Activated CD4-positive, alpha-beta T cell treated with anti-CD3 and anti-CD28 coated beads for 36 hours (primary cell): ENCODE measurements at regions of chr5 and their contacts with region 1.

Region 1: GRCh38 chr5:170225326-170226128 is 7.3 kb upstream of the C5orf58 start:
- DNase-seq: peak; percentile 87
- ATAC-seq: peak; percentile 64
- H3K4me3 Mint-ChIP-seq: no peak overlapping the region
- H3K27ac Mint-ChIP-seq: no peak overlapping the region
- H3K4me1 Mint-ChIP-seq: peaks cover 3% of the 10 kb centered on the region
- H3K27me3 Mint-ChIP-seq: no peaks in the 10 kb centered on the region

Region 2: DNA sequence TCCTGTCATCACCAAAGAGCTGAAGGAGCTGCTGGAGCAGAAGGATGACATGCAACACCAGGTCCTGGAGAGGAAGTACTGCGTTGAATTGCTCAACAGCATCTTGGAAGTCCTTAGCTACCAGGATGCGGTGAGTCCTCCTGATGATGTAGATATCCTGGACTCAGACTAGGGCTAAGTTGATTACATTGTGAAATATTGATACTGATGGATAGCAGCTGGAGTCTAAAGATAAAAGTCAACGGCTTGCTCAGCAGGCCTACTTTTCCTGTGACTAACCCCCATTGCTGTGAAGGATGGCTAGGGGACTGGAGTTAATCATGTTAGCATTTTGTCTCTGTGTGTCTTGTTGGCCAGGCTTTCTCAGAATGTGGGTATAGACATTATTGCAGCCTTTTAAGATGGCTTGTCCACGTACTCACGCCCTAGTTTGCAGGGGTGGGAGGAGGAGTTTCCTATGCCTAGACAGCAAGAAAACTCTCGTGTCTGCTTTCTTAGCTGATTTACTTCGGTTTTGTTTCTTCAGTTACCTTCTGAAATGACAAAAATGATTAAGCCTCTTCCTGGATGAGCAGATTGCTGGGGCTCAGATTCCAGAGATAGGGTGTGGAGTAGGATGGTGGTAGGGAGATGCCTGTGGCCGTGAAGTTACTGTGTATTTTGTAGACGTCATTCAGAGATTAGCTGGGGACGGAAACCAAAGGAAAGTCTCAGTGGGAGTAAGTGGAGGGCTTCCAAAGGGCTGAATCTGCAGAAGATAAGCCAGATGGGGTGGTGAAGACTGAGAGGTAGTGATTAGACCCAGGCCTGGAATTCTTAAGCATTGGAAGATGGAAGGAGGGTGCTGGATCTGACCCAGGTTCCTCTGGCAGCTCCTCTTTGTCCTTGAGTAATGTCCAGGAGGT is 422.2 kb before region 1 on chr5:
- CTCF ChIA-PET with region 1: no interaction called
- POLR2A ChIA-PET with region 1: no interaction called
- intact Hi-C with region 1: no loop called
- DNase-seq: no peak
- ATAC-seq: no peak
- H3K4me3 Mint-ChIP-seq: no peak overlapping the region
- H3K27ac Mint-ChIP-seq: no peak overlapping the region
- H3K4me1 Mint-ChIP-seq: peaks cover 54% of the 10 kb centered on the region
- H3K27me3 Mint-ChIP-seq: no peaks in the 10 kb centered on the region

Region 3: DNA sequence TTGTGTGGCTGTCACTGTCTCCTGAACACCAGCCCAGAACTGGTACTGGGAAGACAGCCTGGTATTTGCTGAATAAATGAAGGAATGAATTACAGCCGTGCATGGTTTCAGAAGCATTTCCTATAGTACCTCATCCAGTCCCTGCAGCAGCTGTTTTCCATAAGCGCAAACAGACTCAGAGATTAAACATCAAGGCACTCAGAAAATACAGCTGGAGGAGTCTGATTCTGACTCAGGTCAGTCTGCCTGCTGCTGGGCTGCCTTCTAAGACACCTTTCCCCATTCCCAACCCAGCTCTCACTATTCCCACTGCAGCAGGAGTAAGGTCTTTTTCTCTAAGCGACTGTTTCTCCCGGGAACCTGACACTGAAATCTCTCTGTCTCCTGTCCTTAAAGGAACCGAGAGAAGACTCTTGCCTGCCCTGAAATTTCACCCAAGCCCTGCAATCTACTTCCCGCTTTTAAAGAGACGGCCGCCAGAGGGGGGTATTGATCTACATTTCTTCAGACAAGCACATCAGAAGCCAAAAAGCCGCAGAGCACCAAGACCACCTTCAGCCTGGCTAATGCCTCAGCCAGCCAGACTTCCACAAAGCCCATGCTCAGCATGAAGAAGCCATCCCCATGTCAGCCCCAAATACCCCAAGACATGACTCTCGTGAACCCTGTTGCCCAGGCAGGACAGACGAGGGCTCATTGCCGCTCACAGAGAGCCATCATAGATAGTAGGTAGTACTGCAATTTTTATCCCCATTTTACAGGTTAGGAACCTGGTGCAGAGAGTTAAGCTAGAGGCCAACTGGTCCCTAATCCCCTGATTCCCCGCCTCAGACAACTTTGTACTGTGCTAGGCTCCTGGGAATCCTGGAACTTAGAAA is 125.2 kb before region 1 on chr5:
- CTCF ChIA-PET with region 1: no interaction called
- POLR2A ChIA-PET with region 1: no interaction called
- intact Hi-C with region 1: loop called in 1 of 2 experiments (anchors 2 kb)
- DNase-seq: peak; percentile 85
- ATAC-seq: peak; percentile 61
- H3K4me3 Mint-ChIP-seq: no peak overlapping the region
- H3K27ac Mint-ChIP-seq: no peak overlapping the region
- H3K4me1 Mint-ChIP-seq: no peaks in the 10 kb centered on the region
- H3K27me3 Mint-ChIP-seq: peaks cover 2% of the 10 kb centered on the region

Region 4: GRCh38 chr5:170235876-170236864 is 10.6 kb after region 1 on chr5:
- CTCF ChIA-PET with region 1: interaction called, 18 read pairs
- POLR2A ChIA-PET with region 1: no interaction called
- intact Hi-C with region 1: no loop called
- DNase-seq: no peak
- ATAC-seq: no peak
- H3K4me3 Mint-ChIP-seq: no peak overlapping the region
- H3K27ac Mint-ChIP-seq: no peak overlapping the region
- H3K4me1 Mint-ChIP-seq: peaks cover 14% of the 10 kb centered on the region
- H3K27me3 Mint-ChIP-seq: no peaks in the 10 kb centered on the region

Region 5: DNA sequence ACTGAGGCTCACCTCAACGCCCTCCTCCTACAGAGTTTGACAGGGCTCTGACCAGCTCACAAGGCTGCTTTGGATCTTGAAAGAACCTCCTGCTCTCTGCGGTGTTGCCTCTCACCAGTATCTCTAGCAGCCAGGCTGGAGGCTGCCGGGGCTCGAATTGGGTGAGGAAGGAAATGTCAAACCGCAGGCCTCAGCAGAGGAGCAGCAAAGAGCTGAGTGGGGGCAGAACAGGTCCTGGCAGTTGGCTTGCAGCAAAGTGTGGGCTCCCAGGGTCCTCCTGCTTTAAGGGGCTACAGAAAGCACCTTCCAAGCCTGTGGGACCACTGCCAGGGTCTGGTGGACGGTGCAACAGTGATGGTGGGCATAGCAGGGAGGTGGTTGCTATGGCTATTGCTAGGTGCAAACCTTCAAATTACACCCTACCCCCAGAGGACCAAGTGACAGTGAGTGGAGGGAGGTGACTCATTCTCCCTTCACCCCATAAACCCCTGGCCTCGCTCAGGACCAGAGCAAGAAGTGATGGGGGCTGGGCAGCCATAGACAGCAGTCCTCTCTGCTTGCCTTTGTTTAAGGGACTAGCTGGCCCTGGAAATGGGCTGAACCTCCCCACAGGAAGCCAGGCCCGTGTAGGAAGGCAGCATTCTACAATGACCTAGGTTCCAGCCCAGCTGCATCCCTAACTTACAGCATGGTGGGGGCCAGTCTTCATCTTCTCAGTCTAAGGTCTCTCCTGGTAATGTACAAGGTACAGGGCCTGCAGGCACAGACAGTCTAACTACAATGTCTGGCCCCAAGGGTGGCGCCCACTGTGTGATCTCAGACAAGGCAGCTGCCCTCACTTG is 53.3 kb after region 1 on chr5:
- CTCF ChIA-PET with region 1: interaction called, 11 read pairs
- POLR2A ChIA-PET with region 1: interaction called, 3 read pairs
- intact Hi-C with region 1: loop called in 1 of 2 experiments (anchors 10 kb)
- DNase-seq: peak; percentile 93
- ATAC-seq: peak; percentile 73
- H3K4me3 Mint-ChIP-seq: peak overlapping the region; percentile 48
- H3K27ac Mint-ChIP-seq: peak overlapping the region; percentile 90
- H3K4me1 Mint-ChIP-seq: peaks cover 97% of the 10 kb centered on the region
- H3K27me3 Mint-ChIP-seq: no peaks in the 10 kb centered on the region

Region 6: GRCh38 chr5:170420780-170421412 is 195.4 kb after region 1 on chr5:
- CTCF ChIA-PET with region 1: interaction called, 99 read pairs
- POLR2A ChIA-PET with region 1: no interaction called
- intact Hi-C with region 1: loop called (anchors 1 kb)
- DNase-seq: peak; percentile 68
- ATAC-seq: peak; percentile 53
- H3K4me3 Mint-ChIP-seq: no peak overlapping the region
- H3K27ac Mint-ChIP-seq: no peak overlapping the region
- H3K4me1 Mint-ChIP-seq: peaks cover 11% of the 10 kb centered on the region
- H3K27me3 Mint-ChIP-seq: no peaks in the 10 kb centered on the region

Region 7: DNA sequence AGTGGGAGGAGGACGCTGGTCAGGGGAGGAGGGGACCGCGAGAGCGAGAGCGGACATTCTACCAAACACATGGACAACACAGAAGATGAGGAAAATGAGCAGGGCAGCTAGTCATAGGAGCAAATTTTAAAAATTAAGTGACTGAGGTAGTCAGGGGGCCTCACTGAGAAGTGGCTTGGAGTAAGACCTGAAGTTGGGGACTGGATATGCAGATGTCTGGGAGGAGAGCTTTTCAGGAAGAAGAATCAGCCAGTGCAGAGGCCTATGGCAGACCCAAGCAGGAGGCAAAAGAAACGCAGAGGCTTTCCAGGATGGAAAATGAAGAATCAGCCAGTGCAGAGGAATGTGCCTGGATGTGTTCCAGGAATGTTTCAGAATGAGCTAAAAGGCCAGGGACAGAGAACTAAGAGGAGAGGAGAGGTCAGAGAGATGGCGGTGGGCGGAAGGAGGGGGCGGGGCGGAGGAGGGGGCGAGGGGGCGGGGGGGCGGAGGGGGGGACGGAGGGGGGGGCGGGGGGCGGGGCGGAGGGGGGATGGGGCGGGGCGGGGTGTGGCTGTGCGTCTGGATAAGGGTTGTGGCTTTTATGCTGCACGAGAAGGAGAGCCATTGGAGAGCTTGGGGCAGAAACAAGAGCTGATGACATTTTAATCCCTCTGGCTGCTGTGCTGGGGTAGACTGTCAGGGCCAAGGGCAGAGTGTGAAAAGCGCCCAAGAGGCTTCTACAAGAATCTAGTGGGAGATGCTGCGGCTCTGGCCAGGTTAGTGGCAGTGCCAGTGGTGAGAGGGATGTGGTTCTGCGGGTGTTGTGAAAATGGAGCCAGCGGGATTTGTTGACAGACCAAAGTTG is 407.9 kb after region 1 on chr5:
- CTCF ChIA-PET with region 1: interaction called, 3 read pairs
- POLR2A ChIA-PET with region 1: no interaction called
- intact Hi-C with region 1: loop called (anchors 5 to 10 kb)
- DNase-seq: peak; percentile 19
- ATAC-seq: peak; percentile 30
- H3K4me3 Mint-ChIP-seq: peak overlapping the region; percentile 33
- H3K27ac Mint-ChIP-seq: no peak overlapping the region
- H3K4me1 Mint-ChIP-seq: peaks cover 15% of the 10 kb centered on the region
- H3K27me3 Mint-ChIP-seq: peaks cover 7% of the 10 kb centered on the region

Region 8: DNA sequence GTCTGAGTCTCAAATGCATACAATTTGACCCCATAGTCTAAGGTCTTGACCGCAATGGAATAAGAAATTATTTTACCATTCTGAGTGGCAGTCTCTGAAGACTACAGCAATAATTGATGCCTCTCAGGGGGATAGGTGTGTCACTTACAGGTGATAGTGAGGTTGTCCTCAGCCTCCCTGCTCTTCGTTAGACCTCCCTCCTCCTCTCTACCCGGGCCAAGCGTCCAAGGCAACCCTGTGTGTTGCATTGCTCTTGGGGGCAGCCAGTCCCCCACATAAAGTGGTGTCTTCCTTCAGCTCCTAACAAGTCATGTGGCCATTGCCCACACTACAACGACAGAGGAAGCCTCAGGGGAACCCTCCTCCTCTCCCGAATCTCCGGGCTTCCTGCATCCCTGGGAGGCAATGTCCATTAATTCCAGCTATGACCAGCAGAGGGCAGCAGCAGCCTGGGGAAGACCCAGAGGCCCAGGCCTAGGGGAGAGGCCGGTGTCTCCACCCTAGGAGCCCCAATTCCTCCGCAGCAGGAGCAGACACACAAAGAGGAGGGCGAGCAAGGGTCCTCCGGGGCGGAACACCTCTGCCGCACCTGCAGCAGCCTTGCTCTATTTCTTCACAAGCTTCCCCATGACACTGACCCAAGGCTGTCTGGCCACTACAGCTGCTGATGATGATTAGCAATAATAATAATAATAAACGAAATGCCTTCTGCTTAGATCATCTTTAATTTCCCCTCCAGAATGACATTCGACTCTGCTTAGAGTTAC is 413.1 kb after region 1 on chr5:
- CTCF ChIA-PET with region 1: interaction called, 3 read pairs
- POLR2A ChIA-PET with region 1: no interaction called
- intact Hi-C with region 1: loop called (anchors 5 to 10 kb)
- DNase-seq: peak; percentile 84
- ATAC-seq: peak; percentile 74
- H3K4me3 Mint-ChIP-seq: no peak overlapping the region
- H3K27ac Mint-ChIP-seq: no peak overlapping the region
- H3K4me1 Mint-ChIP-seq: peaks cover 7% of the 10 kb centered on the region
- H3K27me3 Mint-ChIP-seq: peaks cover 8% of the 10 kb centered on the region